ENCODE measurements at regions of chr7 and their contacts with region 1.

Region 1: DNA sequence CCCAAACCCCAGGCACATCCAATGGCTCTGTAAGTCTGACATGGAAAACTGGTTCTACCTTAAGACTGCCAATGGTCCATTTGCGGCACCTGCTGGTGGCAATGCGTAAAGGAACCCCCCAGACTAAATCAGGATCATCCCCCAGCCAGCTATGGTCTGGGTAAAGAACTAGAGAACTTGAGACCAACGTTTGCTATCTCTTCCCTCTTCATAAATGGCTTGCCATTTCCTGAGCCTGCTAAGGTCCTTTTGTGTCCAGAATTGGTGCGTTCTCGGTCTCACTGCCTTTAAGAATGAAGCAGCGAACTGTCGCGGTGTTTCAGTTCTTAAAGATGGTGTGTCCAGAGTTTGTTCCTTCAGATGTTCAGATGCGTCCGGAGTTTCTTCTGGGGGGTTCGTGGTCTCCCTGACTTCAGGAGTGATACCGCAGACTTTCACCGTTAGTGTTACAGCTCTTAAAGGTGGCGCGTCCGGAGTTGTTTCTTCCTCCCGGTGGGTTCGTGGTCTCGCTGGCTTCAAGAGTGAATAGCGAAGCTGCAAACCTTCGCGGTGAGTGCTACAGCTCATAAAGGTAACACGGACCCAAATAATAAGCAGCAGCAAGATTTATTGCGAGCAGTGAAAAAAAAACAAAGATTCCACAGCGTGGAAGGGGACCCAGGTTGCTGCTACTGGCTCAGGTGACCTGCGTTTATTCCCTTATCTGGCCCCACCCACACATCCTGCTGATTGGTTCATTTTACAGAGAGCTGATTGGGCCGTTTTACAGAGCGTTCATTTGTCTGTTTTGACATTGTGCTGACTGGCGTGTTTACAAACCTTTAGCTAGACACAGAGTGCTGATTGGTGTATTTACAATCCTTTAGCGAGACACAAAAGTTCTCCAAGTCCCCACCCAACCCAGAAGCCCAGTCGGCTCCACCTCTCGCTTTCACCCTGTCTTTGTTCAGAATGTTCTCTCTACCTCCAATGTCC is 95.4 kb downstream of the ELMO1 start:
- DNase-seq: peak; percentile 84
- ATAC-seq: peak; percentile 72
- H3K4me3 ChIP-seq: peak overlapping the region; percentile 67 to 91 (median 79)
- H3K4me3 Mint-ChIP-seq: peak overlapping the region; percentile 95
- H3K27ac ChIP-seq: peak overlapping the region; percentile 8 to 81
- H3K27ac Mint-ChIP-seq: peak overlapping the region; percentile 88
- H3K4me1 ChIP-seq: peaks cover 35 to 42% of the 10 kb centered on the region in 2 donors
- H3K4me1 Mint-ChIP-seq: peaks cover 60% of the 10 kb centered on the region
- H3K27me3 ChIP-seq: no peaks in the 10 kb centered on the region
- H3K27me3 Mint-ChIP-seq: no peaks in the 10 kb centered on the region
- CTCF ChIP-seq: peak; percentile 93

Region 2: GRCh38 chr7:36986429-36987362 is 366.6 kb before region 1 on chr7:
- CTCF ChIA-PET with region 1: no interaction called
- POLR2A ChIA-PET with region 1: no interaction called
- intact Hi-C with region 1: loop called (anchors 5 kb)
- DNase-seq: peak; percentile 61
- ATAC-seq: peak; percentile 56
- H3K4me3 ChIP-seq: no peak overlapping the region
- H3K4me3 Mint-ChIP-seq: no peak overlapping the region
- H3K27ac ChIP-seq: no peak overlapping the region
- H3K27ac Mint-ChIP-seq: no peak overlapping the region
- H3K4me1 ChIP-seq: peaks cover 15 to 18% of the 10 kb centered on the region in 2 donors
- H3K4me1 Mint-ChIP-seq: peaks cover 37% of the 10 kb centered on the region
- H3K27me3 ChIP-seq: no peaks in the 10 kb centered on the region
- H3K27me3 Mint-ChIP-seq: no peaks in the 10 kb centered on the region
- CTCF ChIP-seq: peak; percentile 88

Region 3: GRCh38 chr7:37225285-37225969 is 127.8 kb before region 1 on chr7:
- CTCF ChIA-PET with region 1: interaction called, 13 read pairs
- POLR2A ChIA-PET with region 1: no interaction called
- intact Hi-C with region 1: no loop called
- DNase-seq: no peak
- ATAC-seq: no peak
- H3K4me3 ChIP-seq: no peak overlapping the region
- H3K4me3 Mint-ChIP-seq: no peak overlapping the region
- H3K27ac ChIP-seq: no peak overlapping the region
- H3K27ac Mint-ChIP-seq: no peak overlapping the region
- H3K4me1 ChIP-seq: no peaks in the 10 kb centered on the region
- H3K4me1 Mint-ChIP-seq: no peaks in the 10 kb centered on the region
- H3K27me3 ChIP-seq: no peaks in the 10 kb centered on the region
- H3K27me3 Mint-ChIP-seq: no peaks in the 10 kb centered on the region
- CTCF ChIP-seq: no peak

Region 4: DNA sequence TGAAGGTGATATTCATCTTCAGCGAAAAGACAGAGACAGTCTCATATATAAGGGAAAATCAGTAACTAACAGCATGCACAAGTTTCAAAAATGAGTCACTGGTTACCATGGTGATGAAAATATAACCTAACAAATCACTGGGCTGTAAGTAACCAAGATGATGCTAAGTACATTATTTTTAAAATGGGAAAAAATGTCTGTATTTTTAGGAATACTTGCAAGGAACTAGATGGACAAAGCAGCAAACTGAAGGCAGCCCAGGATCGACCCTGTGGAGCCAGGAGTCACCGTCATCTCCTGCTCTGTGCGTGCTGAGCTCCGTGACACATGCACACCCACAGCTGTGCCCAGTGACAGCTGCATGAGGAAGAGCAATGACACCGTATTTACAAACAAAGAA is 41.9 kb before region 1 on chr7:
- CTCF ChIA-PET with region 1: interaction called, 9 read pairs
- POLR2A ChIA-PET with region 1: no interaction called
- intact Hi-C with region 1: loop called (anchors 1 kb)
- DNase-seq: peak; percentile 66
- ATAC-seq: peak; percentile 62
- H3K4me3 ChIP-seq: no peak overlapping the region
- H3K4me3 Mint-ChIP-seq: peak overlapping the region; percentile 46
- H3K27ac ChIP-seq: peak overlapping the region; percentile 7 to 58
- H3K27ac Mint-ChIP-seq: peak overlapping the region; percentile 88
- H3K4me1 ChIP-seq: peaks cover 48% of the 10 kb centered on the region in 2 donors
- H3K4me1 Mint-ChIP-seq: peaks cover 68% of the 10 kb centered on the region
- H3K27me3 ChIP-seq: no peaks in the 10 kb centered on the region
- H3K27me3 Mint-ChIP-seq: no peaks in the 10 kb centered on the region
- CTCF ChIP-seq: no peak

Region 5: DNA sequence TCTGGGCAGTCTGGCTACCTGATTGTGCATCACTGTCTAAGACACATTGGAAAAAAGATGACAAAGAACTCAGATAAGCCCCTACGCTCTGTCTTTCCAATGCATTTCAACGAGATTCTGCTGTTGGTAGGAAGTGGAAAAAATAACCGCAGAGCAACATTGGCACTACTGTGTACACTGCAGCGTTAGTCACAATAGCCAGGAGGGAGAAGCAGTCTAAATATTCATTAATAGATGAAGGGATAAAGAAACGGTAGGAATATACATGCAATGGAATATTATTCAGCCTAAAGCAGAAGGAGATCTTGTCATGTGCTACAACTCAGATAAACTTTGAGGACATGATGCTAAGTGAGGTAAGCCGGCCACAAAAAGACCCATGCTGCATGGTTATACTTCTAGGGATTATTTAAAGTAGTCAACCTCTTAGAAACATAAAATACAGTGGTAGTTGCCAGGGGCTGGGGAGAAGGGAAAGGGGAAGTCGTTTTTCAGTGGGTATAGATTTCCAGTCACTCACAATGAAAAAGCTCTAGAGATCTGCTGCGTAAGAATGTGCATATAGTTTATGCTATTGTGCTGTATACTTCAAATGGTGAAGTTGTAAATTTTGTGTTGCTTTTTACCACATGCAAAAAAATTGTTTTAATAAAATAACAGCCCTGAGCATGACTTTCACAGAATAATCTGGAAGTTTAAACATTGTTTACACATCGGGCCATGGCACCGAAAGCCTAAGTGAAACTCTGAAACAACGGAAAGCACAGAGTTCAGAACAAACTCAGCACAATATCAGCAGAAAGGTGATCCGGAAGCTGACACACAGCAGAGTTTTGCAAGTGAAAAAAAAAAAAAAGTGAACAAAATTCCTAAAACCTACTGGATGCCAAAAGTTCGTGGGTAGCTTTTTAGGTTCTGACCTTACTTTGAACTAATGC is 55.3 kb after region 1 on chr7:
- CTCF ChIA-PET with region 1: interaction called, 4 read pairs
- POLR2A ChIA-PET with region 1: no interaction called
- intact Hi-C with region 1: loop called (anchors 5 kb)
- DNase-seq: peak; percentile 43
- ATAC-seq: peak; percentile 60
- H3K4me3 ChIP-seq: peak overlapping the region in 4 of 5 experiments; percentile 29 to 65 (median 44)
- H3K4me3 Mint-ChIP-seq: peak overlapping the region; percentile 83
- H3K27ac ChIP-seq: peak overlapping the region; percentile 19 to 64
- H3K27ac Mint-ChIP-seq: peak overlapping the region; percentile 72
- H3K4me1 ChIP-seq: peaks cover 38 to 39% of the 10 kb centered on the region in 2 donors
- H3K4me1 Mint-ChIP-seq: peaks cover 66% of the 10 kb centered on the region
- H3K27me3 ChIP-seq: no peaks in the 10 kb centered on the region
- H3K27me3 Mint-ChIP-seq: no peaks in the 10 kb centered on the region
- CTCF ChIP-seq: no peak

Region 6: DNA sequence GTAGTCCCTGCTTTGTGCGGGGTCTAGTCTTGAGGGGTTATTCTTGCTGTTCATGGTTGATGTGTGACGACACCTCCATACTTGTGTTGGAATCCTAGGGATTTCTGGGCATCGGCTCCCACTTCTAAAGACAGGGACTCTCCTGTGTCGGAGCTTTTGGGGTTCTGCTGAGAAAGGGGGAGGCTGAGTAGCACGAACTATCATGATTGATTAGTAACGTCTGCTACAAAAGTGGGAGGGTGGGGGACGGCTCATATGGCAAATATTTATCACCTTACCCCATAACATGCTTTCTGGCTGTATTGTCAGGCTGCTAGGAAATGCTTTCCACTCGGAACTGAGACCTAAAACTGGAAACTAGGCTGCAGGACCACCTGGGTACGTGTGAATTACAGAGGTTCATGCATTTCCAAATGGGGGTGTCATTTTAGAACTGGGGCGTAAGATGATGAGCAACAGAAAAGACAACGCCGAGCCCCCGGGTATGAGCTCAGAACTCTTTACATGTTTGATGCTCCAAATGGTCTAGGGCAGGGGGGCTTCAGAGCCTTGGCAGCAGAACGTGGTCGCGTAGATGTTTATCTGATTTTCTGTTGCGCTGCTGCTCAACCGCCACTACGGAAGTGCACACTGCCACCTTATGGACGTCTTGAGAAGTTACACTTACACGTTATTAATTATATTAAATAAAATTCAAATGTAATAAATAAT is 480.0 kb after region 1 on chr7:
- CTCF ChIA-PET with region 1: interaction called, 8 read pairs
- POLR2A ChIA-PET with region 1: no interaction called
- intact Hi-C with region 1: loop called (anchors 5 kb)
- DNase-seq: peak; percentile 68
- ATAC-seq: peak; percentile 61
- H3K4me3 ChIP-seq: peak overlapping the region in 4 of 5 experiments; percentile 26 to 53 (median 46)
- H3K4me3 Mint-ChIP-seq: peak overlapping the region; percentile 89
- H3K27ac ChIP-seq: no peak overlapping the region
- H3K27ac Mint-ChIP-seq: peak overlapping the region; percentile 53
- H3K4me1 ChIP-seq: peaks cover 6 to 10% of the 10 kb centered on the region in 2 donors
- H3K4me1 Mint-ChIP-seq: peaks cover 16% of the 10 kb centered on the region
- H3K27me3 ChIP-seq: peaks cover 0 to 6% (median 0%) of the 10 kb centered on the region in 4 experiments
- H3K27me3 Mint-ChIP-seq: peaks cover 8% of the 10 kb centered on the region
- CTCF ChIP-seq: peak; percentile 84